CD14-positive monocyte (primary cell): ENCODE measurements at regions of chr11 and their contacts with region 1.

Region 1: GRCh38 chr11:2151500-2152257 is 9.3 kb downstream of the INS start:
- DNase-seq: peak; percentile 57 to 67 (median 65)
- H3K4me3 ChIP-seq: peak overlapping the region in 1 of 3 experiments; percentile 31
- H3K4me3 Mint-ChIP-seq: no peak overlapping the region
- H3K27ac ChIP-seq: no peak overlapping the region
- H3K27ac Mint-ChIP-seq: peak overlapping the region in 5 of 7 donors; percentile 19 to 50 (median 25)
- H3K4me1 ChIP-seq: peaks cover 5 to 7% of the 10 kb centered on the region in 2 donors
- H3K4me1 Mint-ChIP-seq: peaks cover 12% of the 10 kb centered on the region
- H3K27me3 ChIP-seq: peaks cover 0 to 43% of the 10 kb centered on the region in 2 donors
- H3K27me3 Mint-ChIP-seq: peaks cover 35 to 68% (median 43%) of the 10 kb centered on the region in 3 donors
- CTCF ChIP-seq: peak; percentile 95

Region 2: DNA sequence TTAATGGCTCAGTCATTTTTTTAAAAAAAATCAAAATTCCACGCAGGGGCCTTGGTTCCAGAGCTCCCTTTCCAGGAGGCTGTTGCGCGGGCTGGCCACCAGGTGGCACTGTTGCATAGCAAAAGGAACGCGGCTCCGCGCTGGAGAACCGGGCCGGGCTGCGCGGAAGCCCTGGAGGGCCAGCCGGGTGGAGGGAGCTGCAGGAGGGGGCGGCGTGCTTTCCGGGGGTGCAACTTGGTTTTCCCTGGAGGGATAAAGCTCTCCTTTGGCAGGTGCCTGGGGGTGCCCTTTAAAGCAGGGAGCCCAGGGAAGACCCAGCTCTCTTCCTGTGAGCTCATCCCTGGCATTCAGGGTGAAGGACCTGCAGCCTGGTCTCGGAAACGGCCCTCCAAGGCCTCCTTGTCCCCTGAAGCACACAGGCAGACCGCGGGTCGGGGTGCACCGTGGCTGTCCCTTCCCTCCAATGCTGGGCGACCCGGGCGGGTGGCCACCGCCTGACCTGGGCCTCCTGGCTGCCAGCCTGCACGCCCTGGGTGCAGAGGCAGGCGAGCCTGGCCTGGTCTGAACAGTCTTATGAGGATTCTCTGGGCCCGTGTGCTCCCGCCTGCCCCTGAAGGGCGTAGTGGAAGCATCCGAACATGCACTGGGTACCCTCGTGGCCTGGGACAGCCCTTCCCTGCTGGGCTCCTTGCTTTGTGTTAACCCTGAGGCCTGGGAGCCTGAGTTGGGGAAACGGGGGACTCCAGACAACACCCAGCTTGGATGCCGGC is 498.7 kb before region 1 on chr11:
- intact Hi-C with region 1: loop called (anchors 2 to 5 kb)
- DNase-seq: peak; percentile 51 to 61 (median 56)
- H3K4me3 ChIP-seq: no peak overlapping the region
- H3K4me3 Mint-ChIP-seq: peak overlapping the region in 1 of 2 donors; percentile 51
- H3K27ac ChIP-seq: no peak overlapping the region
- H3K27ac Mint-ChIP-seq: no peak overlapping the region
- H3K4me1 ChIP-seq: no peaks in the 10 kb centered on the region
- H3K4me1 Mint-ChIP-seq: peaks cover 3% of the 10 kb centered on the region
- H3K27me3 ChIP-seq: peaks cover 0 to 18% of the 10 kb centered on the region in 2 donors
- H3K27me3 Mint-ChIP-seq: peaks cover 15 to 40% (median 19%) of the 10 kb centered on the region in 3 donors
- CTCF ChIP-seq: peak; percentile 98

Region 3: DNA sequence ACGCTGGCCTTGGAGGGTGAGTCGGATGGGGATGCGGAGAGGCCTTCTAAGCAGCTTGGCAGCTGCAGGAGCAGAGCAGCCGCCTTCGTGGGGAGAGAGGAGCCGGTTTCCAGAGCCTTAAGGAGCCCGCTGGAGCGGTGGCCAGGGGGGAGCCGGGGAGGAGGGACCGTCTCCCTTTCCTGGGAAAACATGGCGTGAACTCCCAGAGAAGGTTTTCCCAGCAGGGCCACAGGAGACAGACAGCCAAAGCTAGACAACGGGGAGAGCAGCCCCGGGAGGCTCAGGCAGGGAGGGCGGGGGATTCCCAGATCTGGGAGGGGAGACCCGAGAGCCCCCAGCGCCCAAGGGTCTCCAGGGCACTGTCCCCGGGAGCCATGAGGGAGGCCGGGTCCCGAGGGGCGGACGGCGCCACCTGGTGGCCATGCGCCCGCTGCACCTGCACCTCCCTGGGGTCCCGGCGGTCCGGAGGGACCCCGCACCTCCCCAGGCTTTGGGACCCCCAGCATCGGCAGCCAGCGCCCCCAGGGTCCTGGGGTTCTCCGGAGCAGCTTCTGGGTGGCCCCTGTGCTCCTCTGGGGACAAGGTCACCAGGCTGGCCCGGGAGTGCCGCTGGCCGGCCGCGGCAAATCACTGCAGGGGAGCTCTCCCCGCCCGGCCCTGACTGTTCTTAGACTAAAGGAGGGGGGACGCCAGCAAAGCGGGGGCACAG is 319.3 kb before region 1 on chr11:
- intact Hi-C with region 1: loop called (anchors 5 kb)
- DNase-seq: peak in 2 of 3 donors; percentile 44 to 52
- H3K4me3 ChIP-seq: peak overlapping the region in 2 of 3 experiments; percentile 22 to 64
- H3K4me3 Mint-ChIP-seq: peak overlapping the region; percentile 58 to 72
- H3K27ac ChIP-seq: no peak overlapping the region
- H3K27ac Mint-ChIP-seq: no peak overlapping the region
- H3K4me1 ChIP-seq: peaks cover 8 to 14% of the 10 kb centered on the region in 2 donors
- H3K4me1 Mint-ChIP-seq: peaks cover 8% of the 10 kb centered on the region
- H3K27me3 ChIP-seq: peaks cover 0 to 47% of the 10 kb centered on the region in 2 donors
- H3K27me3 Mint-ChIP-seq: peaks cover 43 to 74% (median 43%) of the 10 kb centered on the region in 3 donors
- CTCF ChIP-seq: peak; percentile 100

Region 4: GRCh38 chr11:1882519-1883238 is 269.0 kb before region 1 on chr11:
- intact Hi-C with region 1: loop called in 1 of 2 experiments (anchors 10 kb)
- DNase-seq: peak; percentile 51 to 66 (median 64)
- H3K4me3 ChIP-seq: no peak overlapping the region
- H3K4me3 Mint-ChIP-seq: no peak overlapping the region
- H3K27ac ChIP-seq: peak overlapping the region in 1 of 2 donors; percentile 26
- H3K27ac Mint-ChIP-seq: no peak overlapping the region
- H3K4me1 ChIP-seq: peaks cover 34 to 40% of the 10 kb centered on the region in 2 donors
- H3K4me1 Mint-ChIP-seq: peaks cover 33% of the 10 kb centered on the region
- H3K27me3 ChIP-seq: peaks cover 0 to 4% of the 10 kb centered on the region in 2 donors
- H3K27me3 Mint-ChIP-seq: peaks cover 4 to 12% (median 5%) of the 10 kb centered on the region in 3 donors
- CTCF ChIP-seq: peak; percentile 91

Region 5: DNA sequence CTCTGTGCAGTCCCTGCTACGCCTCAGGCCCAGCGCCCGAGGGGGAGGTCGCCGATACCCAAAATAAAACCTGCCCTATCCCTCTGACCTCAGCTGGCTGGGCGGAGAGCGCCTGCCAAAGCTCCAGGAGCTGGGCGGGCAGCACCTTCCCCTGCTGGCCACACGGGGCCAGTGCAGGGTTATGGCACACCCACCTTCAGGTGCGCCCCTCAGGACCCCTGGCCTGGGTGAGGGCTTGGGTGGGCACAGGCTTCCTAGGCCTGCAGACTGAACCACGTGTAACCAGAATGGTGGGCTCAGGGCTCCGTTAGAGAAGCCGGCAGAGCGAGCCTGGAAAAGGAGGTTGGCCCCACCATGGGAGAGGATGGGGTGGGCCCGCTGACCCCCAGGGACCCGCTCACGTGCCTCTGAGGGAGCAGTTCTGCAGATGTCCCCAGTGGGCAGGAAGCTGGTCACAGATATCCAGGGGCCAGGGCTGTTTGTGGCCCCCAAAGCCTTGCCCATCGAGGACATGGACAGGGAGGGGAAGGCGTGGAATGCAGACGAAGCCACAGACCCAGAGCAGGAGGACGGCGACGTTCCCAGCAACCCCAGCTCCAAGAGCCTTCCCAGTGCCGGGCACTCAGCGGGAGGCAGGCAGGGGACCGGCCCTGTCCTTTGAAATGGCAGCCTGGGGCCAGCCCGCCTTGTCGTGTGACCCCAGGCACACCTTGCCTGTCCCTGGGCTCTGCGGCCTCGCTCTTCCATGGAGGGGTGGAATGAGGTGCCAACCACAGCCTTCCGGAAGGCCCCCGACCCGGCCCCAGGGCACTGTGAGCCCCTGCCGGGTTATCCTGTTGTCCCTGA is 233.8 kb before region 1 on chr11:
- intact Hi-C with region 1: loop called in 1 of 2 experiments (anchors 10 kb)
- DNase-seq: no peak
- H3K4me3 ChIP-seq: no peak overlapping the region
- H3K4me3 Mint-ChIP-seq: no peak overlapping the region
- H3K27ac ChIP-seq: no peak overlapping the region
- H3K27ac Mint-ChIP-seq: no peak overlapping the region
- H3K4me1 ChIP-seq: peaks cover 0 to 2% of the 10 kb centered on the region in 2 donors
- H3K4me1 Mint-ChIP-seq: peaks cover 6% of the 10 kb centered on the region
- H3K27me3 ChIP-seq: no peaks in the 10 kb centered on the region
- H3K27me3 Mint-ChIP-seq: peaks cover 5 to 8% (median 6%) of the 10 kb centered on the region in 3 donors
- CTCF ChIP-seq: peak; percentile 88